Left colon (tissue), 2 donors: ENCODE measurements at regions of chrX and their contacts with region 1.

Region 1: GRCh38 chrX:40651620-40652223 is 4.4 kb upstream of the CXorf38 start:
- DNase-seq: peak; percentile 55 to 79
- ATAC-seq: no peak

Region 2: GRCh38 chrX:40792433-40792832 is 140.7 kb after region 1 on chrX:
- intact Hi-C with region 1: loop called in 1 of 2 experiments (anchors 10 kb)
- DNase-seq: no peak
- ATAC-seq: no peak

Region 3: DNA sequence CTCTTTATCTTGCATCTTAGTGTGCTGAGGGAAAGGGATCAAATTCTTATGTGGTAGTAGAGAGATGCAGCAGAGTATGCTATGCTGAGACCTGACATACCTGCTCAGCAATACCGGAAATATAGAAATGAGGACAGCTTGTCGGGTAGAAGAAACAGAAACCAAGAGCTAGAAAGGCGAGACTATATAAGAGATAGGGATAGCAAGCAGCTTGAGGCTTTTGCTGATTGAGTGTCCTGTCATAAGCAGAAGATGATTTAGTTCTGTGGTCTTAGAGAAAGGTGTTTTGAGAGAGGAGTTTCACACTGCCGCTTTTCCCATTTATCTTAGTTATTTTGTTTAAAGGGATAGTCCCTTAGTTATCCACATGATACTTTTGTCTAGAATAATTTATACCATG is 465.2 kb after region 1 on chrX:
- intact Hi-C with region 1: loop called in 1 of 2 experiments (anchors 10 kb)
- DNase-seq: no peak
- ATAC-seq: peak; percentile 66

Region 4: GRCh38 chrX:41250867-41251266 is 599.1 kb after region 1 on chrX:
- intact Hi-C with region 1: loop called in 1 of 2 experiments (anchors 5 kb)
- DNase-seq: no peak
- ATAC-seq: no peak